ENCODE measurements at regions of chrX and their contacts with region 1.

Region 1: GRCh38 chrX:25144043-25144940 is 128.5 kb upstream of the ARX start:
- DNase-seq: peak; percentile 55
- ATAC-seq: peak; percentile 42

Region 2: DNA sequence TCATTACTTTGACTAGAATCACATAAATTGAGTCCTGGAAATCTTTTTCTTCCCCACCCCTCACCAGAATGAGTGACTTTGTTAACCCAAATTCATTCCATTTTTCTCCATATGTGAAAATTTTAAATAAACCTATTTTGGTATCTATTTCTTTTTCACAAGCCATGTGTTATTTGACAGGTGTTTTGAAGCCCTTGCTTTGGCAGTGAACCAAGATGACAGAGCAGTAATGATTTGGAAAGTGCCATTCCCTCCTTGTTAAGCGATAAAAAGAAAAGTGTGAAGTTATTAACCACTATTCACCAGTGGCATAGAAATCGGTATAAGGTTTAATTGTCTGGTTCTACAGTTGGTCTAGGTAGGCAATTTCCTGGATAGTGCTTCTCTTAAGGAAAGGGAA is 384.5 kb before region 1 on chrX:
- intact Hi-C with region 1: loop called (anchors 10 kb)
- DNase-seq: no peak
- ATAC-seq: no peak

Region 3: GRCh38 chrX:24838629-24839028 is 305.7 kb before region 1 on chrX:
- intact Hi-C with region 1: loop called (anchors 5 kb)
- DNase-seq: no peak
- ATAC-seq: no peak

Region 4: GRCh38 chrX:24982306-24982965 is 161.9 kb before region 1 on chrX:
- intact Hi-C with region 1: no loop called
- DNase-seq: no peak
- ATAC-seq: no peak